BJ (cell line): ENCODE measurements at regions of chr6 and their contacts with region 1.

Region 1: GRCh38 chr6:2749969-2750600 is 637 bp downstream of the MYLK4 start:
- DNase-seq: no peak
- H3K4me3 ChIP-seq: no peak overlapping the region
- H3K27me3 ChIP-seq: no peaks in the 10 kb centered on the region
- CTCF ChIP-seq: peak; percentile 86

Region 2: DNA sequence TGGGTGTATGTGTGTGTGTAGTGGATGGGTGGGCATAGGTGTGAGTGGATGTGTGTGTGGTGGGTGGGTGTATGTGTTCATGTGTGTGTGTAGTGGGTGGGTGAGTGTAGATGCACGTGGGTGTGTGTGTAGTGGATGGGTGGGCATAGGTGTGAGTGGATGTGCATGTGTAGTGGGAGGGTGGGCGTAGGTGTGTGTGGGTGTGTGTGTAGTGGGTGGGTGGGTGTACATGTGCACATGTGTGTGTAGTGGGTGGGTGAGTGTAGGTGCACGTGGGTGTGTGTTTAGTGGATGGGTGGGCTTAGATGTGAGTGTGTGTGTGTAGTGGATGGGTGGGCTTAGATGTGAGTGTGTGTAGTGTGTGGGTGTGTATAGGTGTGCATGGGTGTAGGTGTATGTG is 103.7 kb before region 1 on chr6:
- CTCF ChIA-PET with region 1: no interaction called
- POLR2A ChIA-PET with region 1: no interaction called
- DNase-seq: no peak
- H3K4me3 ChIP-seq: no peak overlapping the region
- H3K27me3 ChIP-seq: peaks cover 3% of the 10 kb centered on the region; the same call in 1 of the 2 replicates
- CTCF ChIP-seq: no peak

Region 3: DNA sequence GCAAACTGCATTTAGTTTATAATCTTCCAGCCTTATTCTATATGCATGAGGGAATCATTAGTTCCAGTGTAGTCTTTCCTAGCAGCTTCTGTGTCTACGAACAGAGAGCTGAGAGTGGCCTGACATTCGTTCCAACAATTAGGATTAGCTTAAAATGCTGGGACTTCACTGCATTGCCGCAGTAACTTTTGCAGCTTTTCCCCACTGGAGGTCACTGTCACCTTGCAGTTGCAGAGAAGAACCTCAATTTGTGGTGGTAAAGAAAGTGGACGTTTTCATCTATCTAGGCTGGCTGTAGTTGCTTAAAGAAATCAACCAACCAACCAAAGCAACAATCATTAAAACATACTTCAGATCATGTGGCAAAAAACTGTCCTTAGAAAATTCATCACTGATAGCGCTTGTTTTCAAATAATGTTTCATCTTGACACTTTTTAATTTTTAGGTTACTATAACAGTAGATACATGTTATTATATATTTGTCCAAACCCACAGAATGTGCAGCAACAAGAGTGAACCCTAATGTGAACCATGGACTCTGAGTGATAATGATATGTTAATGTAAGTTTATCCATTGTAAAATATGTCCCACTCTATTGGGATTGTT is 11.6 kb before region 1 on chr6:
- CTCF ChIA-PET with region 1: interaction called, 124 read pairs
- POLR2A ChIA-PET with region 1: no interaction called
- DNase-seq: no peak
- H3K4me3 ChIP-seq: no peak overlapping the region
- H3K27me3 ChIP-seq: no peaks in the 10 kb centered on the region
- CTCF ChIP-seq: peak; percentile 75